GM10248 (cell line): ENCODE measurements at regions of chr13 and their contacts with region 1.

Region 1: DNA sequence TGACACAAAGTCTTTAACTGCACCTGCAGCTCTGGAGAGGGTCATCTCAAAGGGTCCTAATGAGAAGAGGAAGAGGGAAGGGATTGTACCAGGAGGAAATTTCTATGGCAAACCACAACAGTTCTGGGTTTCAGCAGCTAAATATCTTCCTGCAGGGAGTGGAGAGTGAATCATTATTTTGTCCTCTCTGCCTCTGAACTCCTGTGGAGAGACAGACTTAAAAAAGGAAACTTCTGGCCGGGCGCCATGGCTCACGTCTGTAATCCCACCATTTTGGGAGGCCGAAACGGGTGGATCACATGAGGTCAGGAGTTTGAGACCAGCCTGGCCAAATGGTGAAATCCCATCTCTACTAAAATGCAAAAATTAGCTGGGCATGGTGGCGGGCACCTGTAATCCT is 16.9 kb upstream of the C1QTNF9 start:
- DNase-seq: no peak
- CTCF ChIP-seq: no peak

Region 2: GRCh38 chr13:24280720-24281119 is 11.8 kb before region 1 on chr13:
- CTCF ChIA-PET with region 1: interaction called, 14 read pairs
- POLR2A ChIA-PET with region 1: no interaction called
- DNase-seq: peak; percentile 67
- CTCF ChIP-seq: no peak